ENCODE measurements at regions of chr9 and their contacts with region 1.

Region 1: GRCh38 chr9:83956434-83957247 is 23.4 kb downstream of the HNRNPK start:
- DNase-seq: peak; percentile 12 to 75 (median 44)
- ATAC-seq: peak; percentile 78
- H3K4me3 ChIP-seq: peak overlapping the region; percentile 84
- H3K4me3 Mint-ChIP-seq: peak overlapping the region; percentile 98
- H3K27ac ChIP-seq: peak overlapping the region; percentile 65 to 82
- H3K27ac Mint-ChIP-seq: peak overlapping the region; percentile 93
- H3K4me1 ChIP-seq: peaks cover 20% of the 10 kb centered on the region
- H3K4me1 Mint-ChIP-seq: peaks cover 23% of the 10 kb centered on the region
- H3K27me3 ChIP-seq: no peaks in the 10 kb centered on the region
- H3K27me3 Mint-ChIP-seq: no peaks in the 10 kb centered on the region
- CTCF ChIP-seq: no peak

Region 2: GRCh38 chr9:83920927-83921707 is 35.5 kb before region 1 on chr9 and contains the start of gene KIF27:
- CTCF ChIA-PET with region 1: interaction called, 3 read pairs
- POLR2A ChIA-PET with region 1: interaction called, 13 read pairs
- intact Hi-C with region 1: loop called (anchors 5 kb)
- DNase-seq: peak; percentile 91 to 97 (median 95)
- ATAC-seq: peak; percentile 83
- H3K4me3 ChIP-seq: peak within 1 kb of the TSS; percentile 69
- H3K4me3 Mint-ChIP-seq: peak within 1 kb of the TSS; percentile 98
- H3K27ac ChIP-seq: peak within 1 kb of the TSS; percentile 85 to 91
- H3K27ac Mint-ChIP-seq: peak within 1 kb of the TSS; percentile 91
- H3K4me1 ChIP-seq: peaks cover 14% of the 10 kb centered on the region
- H3K4me1 Mint-ChIP-seq: peaks cover 17% of the 10 kb centered on the region
- H3K27me3 ChIP-seq: no peaks in the 10 kb centered on the region
- H3K27me3 Mint-ChIP-seq: no peaks in the 10 kb centered on the region
- CTCF ChIP-seq: peak; percentile 79
- total RNA-seq, gene KIF27: 3.6 to 5.1 TPM

Region 3: DNA sequence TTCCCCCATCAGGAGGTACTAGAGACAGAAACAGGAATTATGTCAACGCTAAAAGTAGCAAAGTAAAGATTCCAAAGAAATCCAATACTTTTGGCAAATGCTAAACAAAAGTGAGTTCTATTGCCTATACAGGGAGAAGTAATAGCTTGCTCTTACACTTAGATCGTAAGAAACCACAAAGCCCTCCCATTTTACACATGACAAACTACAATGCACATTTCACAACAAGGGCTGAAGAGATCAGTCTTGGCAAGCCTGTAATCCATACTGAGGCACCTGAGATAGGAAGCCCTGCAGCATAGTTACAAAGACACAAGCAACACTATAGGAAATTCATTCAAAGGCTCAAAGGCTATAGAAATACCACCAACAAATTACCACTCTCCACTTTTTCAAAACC is 15.6 kb after region 1 on chr9:
- CTCF ChIA-PET with region 1: no interaction called
- POLR2A ChIA-PET with region 1: interaction called, 77 read pairs
- intact Hi-C with region 1: loop called in 1 of 2 experiments (anchors 2 kb)
- DNase-seq: no peak
- ATAC-seq: no peak
- H3K4me3 ChIP-seq: no peak overlapping the region
- H3K4me3 Mint-ChIP-seq: peak overlapping the region; percentile 20
- H3K27ac ChIP-seq: peak overlapping the region in 1 of 2 donors; percentile 20
- H3K27ac Mint-ChIP-seq: peak overlapping the region; percentile 63
- H3K4me1 ChIP-seq: peaks cover 8% of the 10 kb centered on the region
- H3K4me1 Mint-ChIP-seq: peaks cover 66% of the 10 kb centered on the region
- H3K27me3 ChIP-seq: no peaks in the 10 kb centered on the region
- H3K27me3 Mint-ChIP-seq: no peaks in the 10 kb centered on the region
- CTCF ChIP-seq: no peak

Measured in CD4-positive, alpha-beta T cell (primary cell).